ENCODE measurements at regions of chr1 and their contacts with region 1.

Region 1: DNA sequence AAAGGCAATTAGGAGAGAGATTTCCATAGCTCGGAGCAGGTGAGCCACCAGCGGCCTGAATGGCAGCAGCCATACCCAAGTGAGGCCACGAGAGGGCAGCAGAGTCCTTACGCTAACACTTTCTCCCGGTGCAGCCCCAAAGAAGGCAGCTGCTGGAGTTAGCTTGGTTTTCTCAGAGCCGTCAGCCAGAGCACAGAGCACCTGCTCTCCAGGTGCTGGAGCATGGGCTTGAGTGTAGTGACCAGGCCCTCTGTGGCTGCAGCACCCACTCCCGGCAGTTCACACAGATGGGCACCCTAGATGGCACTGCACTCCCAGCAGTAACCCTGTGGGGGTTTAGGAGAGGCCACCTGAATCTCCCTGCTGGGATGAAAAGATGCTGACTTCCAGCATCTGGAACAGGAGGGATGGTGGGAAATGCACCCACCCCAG is 45.8 kb downstream of the TMCC2 start:
- DNase-seq: peak; percentile 74
- H3K4me3 ChIP-seq: no peak overlapping the region
- H3K27ac ChIP-seq: no peak overlapping the region
- H3K27me3 ChIP-seq: no peaks in the 10 kb centered on the region
- CTCF ChIP-seq: peak; percentile 99

Region 2: GRCh38 chr1:205321164-205321958 is 47.8 kb after region 1 on chr1 and contains the start of gene NUAK2:
- in situ Hi-C with region 1: loop called (anchors 10 kb)
- DNase-seq: peak; percentile 91
- H3K4me3 ChIP-seq: peak within 1 kb of the TSS; percentile 92
- H3K27ac ChIP-seq: peak within 1 kb of the TSS; percentile 41
- H3K27me3 ChIP-seq: no peaks in the 10 kb centered on the region
- CTCF ChIP-seq: peak; percentile 40

Measured in brain microvascular endothelial cell (primary cell).